ENCODE measurements at regions of chr7 and their contacts with region 1.

Region 1: GRCh38 chr7:112495810-112496462 is 15.1 kb downstream of the LSMEM1 start:
- DNase-seq: peak; percentile 28
- CTCF ChIP-seq: peak; percentile 63

Region 2: DNA sequence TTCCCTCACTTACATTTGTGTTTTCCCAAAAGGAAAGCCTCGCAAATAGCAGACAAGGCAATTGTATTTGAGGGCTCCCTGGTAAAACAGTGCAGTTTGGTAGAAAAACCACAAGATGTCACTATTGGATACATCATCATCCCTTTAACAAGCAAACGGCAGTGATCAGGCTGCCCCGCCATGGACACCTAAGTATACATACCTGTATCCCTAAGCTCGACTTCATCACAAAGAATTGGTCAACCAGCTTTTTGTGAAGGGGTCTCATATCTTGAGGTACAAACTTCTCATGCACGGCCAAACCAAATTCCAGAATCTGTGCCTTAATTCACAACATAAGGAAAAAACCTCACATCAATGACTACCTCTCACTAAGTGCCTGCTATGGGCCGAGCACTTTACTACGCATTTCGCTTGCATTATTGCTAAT is 754.1 kb before region 1 on chr7:
- CTCF ChIA-PET with region 1: interaction called, 22 read pairs
- POLR2A ChIA-PET with region 1: no interaction called
- DNase-seq: peak; percentile 66
- CTCF ChIP-seq: peak; percentile 66

Region 3: GRCh38 chr7:112481833-112482670 is 13.9 kb before region 1 on chr7:
- CTCF ChIA-PET with region 1: interaction called, 14 read pairs
- POLR2A ChIA-PET with region 1: no interaction called
- DNase-seq: no peak
- CTCF ChIP-seq: no peak

Region 4: DNA sequence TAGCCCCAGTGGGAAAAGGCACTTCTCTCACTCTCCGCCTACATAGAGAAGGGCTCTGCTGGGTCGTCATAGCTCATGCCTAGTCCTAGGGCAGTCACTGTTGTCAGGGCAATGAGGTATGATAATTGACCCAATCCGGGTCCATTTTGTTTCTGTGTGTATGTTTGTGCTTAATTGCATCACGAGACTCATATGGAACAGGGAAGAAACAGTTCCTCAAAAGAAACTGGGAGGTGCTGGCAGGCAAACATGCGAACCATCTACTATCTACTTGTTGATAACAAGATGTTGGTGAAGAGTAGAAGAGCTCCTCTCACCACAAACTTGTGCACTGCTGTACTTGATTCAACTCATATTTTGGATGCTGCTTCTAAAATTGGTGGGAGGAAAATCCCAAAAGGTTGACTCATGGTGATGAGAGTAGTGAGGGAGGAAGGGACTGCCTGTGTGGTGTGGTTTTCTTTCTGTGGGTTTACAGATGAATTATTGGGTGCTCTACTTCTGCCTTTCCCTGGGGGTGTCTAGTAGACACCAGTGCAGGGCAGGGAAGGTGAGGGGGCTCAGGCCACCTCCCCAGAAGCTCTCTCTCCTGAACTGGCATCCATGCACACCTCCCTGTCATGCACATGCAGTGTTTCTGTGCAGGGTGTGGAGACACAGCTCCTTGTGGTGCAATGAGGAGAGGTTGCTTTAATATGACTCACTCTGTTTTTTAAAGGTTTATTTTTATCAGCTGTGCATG is 14.2 kb after region 1 on chr7:
- CTCF ChIA-PET with region 1: interaction called, 10 read pairs
- POLR2A ChIA-PET with region 1: no interaction called
- DNase-seq: peak; percentile 32
- CTCF ChIP-seq: no peak

Region 5: DNA sequence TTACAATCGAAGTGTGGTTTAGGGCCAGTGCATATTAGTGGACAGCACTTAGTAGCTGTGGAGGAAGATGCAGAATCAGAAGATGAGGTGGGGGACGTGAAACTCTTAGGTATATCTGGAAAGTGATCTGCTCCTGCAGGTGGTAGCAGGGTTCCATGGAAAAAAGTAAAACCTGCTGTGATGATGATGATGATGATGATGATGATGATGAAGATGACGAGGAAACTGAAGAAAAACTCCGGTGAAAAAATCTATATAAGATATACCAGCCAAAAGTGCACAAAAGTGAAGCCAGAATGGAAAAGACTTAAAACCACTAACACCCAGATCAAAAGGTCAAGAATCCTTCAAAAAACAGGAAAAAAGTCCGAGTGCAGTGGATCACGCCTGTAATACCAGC is 24.8 kb after region 1 on chr7:
- CTCF ChIA-PET with region 1: no interaction called
- POLR2A ChIA-PET with region 1: no interaction called
- DNase-seq: no peak
- CTCF ChIP-seq: no peak